Activated B cell treated with CpG ODN at 0.5 μM for 24 hours (primary cell): ENCODE measurements at regions of chr2 and their contacts with region 1.

Region 1: GRCh38 chr2:223797811-223798721 is 39.3 kb downstream of the AP1S3 start:
- DNase-seq: no peak
- ATAC-seq: peak; percentile 88
- H3K4me3 Mint-ChIP-seq: peak overlapping the region; percentile 21
- H3K27ac Mint-ChIP-seq: peak overlapping the region; percentile 24
- H3K4me1 Mint-ChIP-seq: peaks cover 57% of the 10 kb centered on the region
- H3K27me3 Mint-ChIP-seq: no peaks in the 10 kb centered on the region
- CTCF ChIP-seq: no peak

Region 2: DNA sequence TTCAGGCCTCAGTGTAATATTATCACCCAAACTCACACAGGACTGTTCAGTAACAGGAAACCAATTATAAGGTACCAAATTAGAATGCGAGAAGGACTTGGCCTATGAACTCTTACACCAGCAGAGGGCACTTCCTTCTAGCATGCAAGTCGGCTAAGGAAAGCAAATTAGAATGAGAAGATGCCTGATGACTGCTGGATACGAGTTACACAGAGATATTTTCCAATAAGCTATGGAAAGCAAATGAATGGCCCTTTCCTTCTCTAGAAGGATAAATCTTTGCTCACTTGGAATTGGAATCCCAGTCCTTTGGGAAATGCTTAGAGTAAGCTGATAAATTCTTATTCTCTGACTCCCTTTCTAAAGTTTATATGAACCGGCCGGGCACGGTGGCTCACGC is 70.5 kb before region 1 on chr2:
- CTCF ChIA-PET with region 1: interaction called, 7 read pairs
- POLR2A ChIA-PET with region 1: no interaction called
- intact Hi-C with region 1: loop called (anchors 1 kb)
- DNase-seq: no peak
- ATAC-seq: peak; percentile 65
- H3K4me3 Mint-ChIP-seq: no peak overlapping the region
- H3K27ac Mint-ChIP-seq: no peak overlapping the region
- H3K4me1 Mint-ChIP-seq: no peaks in the 10 kb centered on the region
- H3K27me3 Mint-ChIP-seq: no peaks in the 10 kb centered on the region
- CTCF ChIP-seq: peak; percentile 20

Region 3: GRCh38 chr2:223779877-223780276 is 18.2 kb before region 1 on chr2:
- CTCF ChIA-PET with region 1: interaction called, 11 read pairs
- POLR2A ChIA-PET with region 1: no interaction called
- intact Hi-C with region 1: loop called (anchors 2 kb)
- DNase-seq: peak; percentile 21
- ATAC-seq: peak; percentile 90
- H3K4me3 Mint-ChIP-seq: no peak overlapping the region
- H3K27ac Mint-ChIP-seq: peak overlapping the region; percentile 41
- H3K4me1 Mint-ChIP-seq: peaks cover 21% of the 10 kb centered on the region
- H3K27me3 Mint-ChIP-seq: no peaks in the 10 kb centered on the region
- CTCF ChIP-seq: no peak

Region 4: DNA sequence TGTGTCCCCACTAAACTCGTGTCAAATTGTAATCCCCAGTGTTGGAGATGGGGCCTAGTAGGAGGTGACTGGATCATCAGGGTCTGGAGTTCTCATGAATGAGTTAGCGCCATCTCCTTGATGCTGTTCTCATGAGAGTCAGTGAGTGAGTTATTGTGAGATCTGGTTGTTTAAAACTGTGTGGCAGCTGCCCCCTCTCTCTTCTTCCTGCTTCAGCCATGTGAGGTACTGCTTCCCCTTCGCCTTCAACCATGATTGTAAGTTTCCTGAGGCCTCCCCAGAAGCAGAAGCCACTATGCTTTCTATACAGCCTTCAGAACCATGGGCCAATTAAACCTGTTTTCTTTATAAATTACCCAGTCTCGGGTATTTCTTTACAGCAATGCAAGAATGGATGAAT is 11.1 kb before region 1 on chr2:
- CTCF ChIA-PET with region 1: interaction called, 5 read pairs
- POLR2A ChIA-PET with region 1: interaction called, 24 read pairs
- intact Hi-C with region 1: loop called (anchors 1 kb)
- DNase-seq: no peak
- ATAC-seq: peak; percentile 71
- H3K4me3 Mint-ChIP-seq: peak overlapping the region; percentile 59
- H3K27ac Mint-ChIP-seq: peak overlapping the region; percentile 90
- H3K4me1 Mint-ChIP-seq: peaks cover 58% of the 10 kb centered on the region
- H3K27me3 Mint-ChIP-seq: no peaks in the 10 kb centered on the region
- CTCF ChIP-seq: no peak

Region 5: DNA sequence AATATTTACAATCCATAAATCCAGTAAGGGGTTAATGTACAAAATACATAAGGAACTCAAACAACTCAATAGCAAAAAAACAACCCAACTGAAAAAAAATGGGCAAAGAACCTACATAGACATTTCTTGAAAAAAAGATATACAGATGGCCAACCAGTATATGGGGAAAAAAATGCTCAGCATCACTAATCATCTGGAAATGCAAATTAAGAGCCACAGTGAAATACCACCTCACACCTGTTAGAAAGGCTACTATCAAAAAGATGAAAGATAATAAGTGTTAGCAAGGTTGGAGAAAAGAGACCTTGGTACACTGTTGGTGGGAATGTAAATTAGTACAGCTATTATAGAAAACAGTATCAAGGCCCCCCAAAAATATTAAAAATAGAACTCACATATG is 24.8 kb after region 1 on chr2:
- CTCF ChIA-PET with region 1: no interaction called
- POLR2A ChIA-PET with region 1: interaction called, 3 read pairs
- intact Hi-C with region 1: loop called (anchors 2 kb)
- DNase-seq: no peak
- ATAC-seq: peak; percentile 74
- H3K4me3 Mint-ChIP-seq: peak overlapping the region; percentile 63
- H3K27ac Mint-ChIP-seq: peak overlapping the region; percentile 26
- H3K4me1 Mint-ChIP-seq: peaks cover 71% of the 10 kb centered on the region
- H3K27me3 Mint-ChIP-seq: no peaks in the 10 kb centered on the region
- CTCF ChIP-seq: no peak